B cell (primary cell): ENCODE measurements at regions of chr19 and their contacts with region 1.

Region 1: DNA sequence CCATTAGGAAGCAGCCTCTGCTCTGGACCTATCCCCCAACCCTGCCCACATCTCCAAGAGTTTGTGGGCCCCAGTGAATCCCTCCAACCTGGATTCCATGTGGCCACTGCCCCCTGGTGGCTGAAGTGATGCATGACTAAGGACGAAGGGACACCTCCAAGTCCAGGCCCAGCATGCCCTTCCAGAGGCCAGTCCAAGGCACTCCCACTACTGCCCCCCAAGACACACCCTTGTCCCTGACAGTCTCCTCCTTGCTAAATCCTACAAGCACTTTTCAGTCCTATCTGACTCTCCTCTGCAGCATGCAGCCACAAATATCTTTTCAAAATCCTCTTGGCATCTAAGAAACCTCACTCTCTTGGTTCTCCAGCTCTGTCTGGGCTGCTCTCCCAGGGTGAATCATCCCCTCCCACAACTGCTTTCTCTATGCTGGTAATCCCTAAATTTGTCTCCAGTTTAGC is 33.0 kb downstream of the DEDD2 start:
- DNase-seq: peak; percentile 78
- ATAC-seq: peak; percentile 64
- H3K4me3 ChIP-seq: no peak overlapping the region
- H3K4me3 Mint-ChIP-seq: no peak overlapping the region
- H3K27ac ChIP-seq: no peak overlapping the region
- H3K27ac Mint-ChIP-seq: peak overlapping the region; percentile 27
- H3K4me1 ChIP-seq: peaks cover 33 to 41% of the 10 kb centered on the region in 2 donors
- H3K4me1 Mint-ChIP-seq: peaks cover 41% of the 10 kb centered on the region
- H3K27me3 ChIP-seq: peaks cover 0 to 13% (median 12%) of the 10 kb centered on the region in 4 experiments
- H3K27me3 Mint-ChIP-seq: peaks cover 8% of the 10 kb centered on the region
- CTCF ChIP-seq: peak; percentile 91

Region 2: GRCh38 chr19:41998246-41999020 is 186.0 kb before region 1 on chr19:
- CTCF ChIA-PET with region 1: no interaction called
- POLR2A ChIA-PET with region 1: no interaction called
- intact Hi-C with region 1: no loop called
- DNase-seq: peak; percentile 54
- ATAC-seq: no peak
- H3K4me3 ChIP-seq: no peak overlapping the region
- H3K4me3 Mint-ChIP-seq: peak overlapping the region; percentile 60
- H3K27ac ChIP-seq: no peak overlapping the region
- H3K27ac Mint-ChIP-seq: no peak overlapping the region
- H3K4me1 ChIP-seq: peaks cover 26 to 29% of the 10 kb centered on the region in 2 donors
- H3K4me1 Mint-ChIP-seq: peaks cover 39% of the 10 kb centered on the region
- H3K27me3 ChIP-seq: peaks cover 0 to 68% (median 37%) of the 10 kb centered on the region in 4 experiments
- H3K27me3 Mint-ChIP-seq: peaks cover 74% of the 10 kb centered on the region
- CTCF ChIP-seq: peak; percentile 61

Region 3: GRCh38 chr19:42113641-42114348 is 70.6 kb before region 1 on chr19:
- CTCF ChIA-PET with region 1: interaction called, 150 read pairs
- POLR2A ChIA-PET with region 1: no interaction called
- intact Hi-C with region 1: loop called (anchors 1 kb)
- DNase-seq: peak; percentile 84
- ATAC-seq: peak; percentile 80
- H3K4me3 ChIP-seq: peak overlapping the region in 4 of 5 experiments; percentile 16 to 49 (median 38)
- H3K4me3 Mint-ChIP-seq: peak overlapping the region; percentile 87
- H3K27ac ChIP-seq: peak overlapping the region; percentile 71 to 79
- H3K27ac Mint-ChIP-seq: peak overlapping the region; percentile 98
- H3K4me1 ChIP-seq: peaks cover 81 to 98% of the 10 kb centered on the region in 2 donors
- H3K4me1 Mint-ChIP-seq: peaks cover 91% of the 10 kb centered on the region
- H3K27me3 ChIP-seq: no peaks in the 10 kb centered on the region
- H3K27me3 Mint-ChIP-seq: no peaks in the 10 kb centered on the region
- CTCF ChIP-seq: no peak

Region 4: DNA sequence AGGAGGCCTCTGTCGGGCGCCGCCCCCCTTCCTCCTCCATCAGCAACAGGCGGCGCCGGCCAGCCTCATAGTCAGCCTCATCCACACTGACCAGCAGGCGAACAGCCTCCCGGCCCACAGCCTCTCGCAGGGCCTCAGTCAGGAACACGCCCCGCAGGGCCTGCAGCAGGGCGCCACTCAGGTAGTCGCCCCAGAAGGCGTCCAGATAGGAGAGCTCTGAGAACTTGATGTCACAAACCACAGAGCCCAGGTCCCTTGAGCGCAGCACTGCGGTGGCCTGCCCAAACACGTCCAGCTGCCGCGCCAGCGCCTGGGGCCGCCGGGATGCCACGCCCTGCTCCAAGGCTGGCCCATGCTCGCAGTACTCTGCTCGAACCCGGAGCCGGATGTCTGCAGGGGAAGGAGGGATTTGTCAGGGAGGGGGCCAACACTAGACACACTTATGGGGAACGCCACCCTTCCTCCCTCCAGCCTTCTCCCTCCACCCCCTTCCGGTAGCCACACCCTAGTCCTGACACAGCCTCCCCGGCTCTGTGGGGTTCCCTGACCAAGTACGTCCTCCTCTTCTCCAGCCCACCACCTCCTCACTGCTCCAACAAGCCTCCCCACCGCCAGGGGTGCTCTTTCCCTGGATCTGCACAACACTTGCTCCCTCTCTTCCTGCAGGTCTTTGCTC is 15.1 kb after region 1 on chr19:
- CTCF ChIA-PET with region 1: interaction called, 14 read pairs
- POLR2A ChIA-PET with region 1: interaction called, 4 read pairs
- intact Hi-C with region 1: loop called (anchors 2 kb)
- DNase-seq: peak; percentile 70
- ATAC-seq: peak; percentile 37
- H3K4me3 ChIP-seq: peak overlapping the region; percentile 27 to 54 (median 44)
- H3K4me3 Mint-ChIP-seq: peak overlapping the region; percentile 77
- H3K27ac ChIP-seq: peak overlapping the region; percentile 91 to 94
- H3K27ac Mint-ChIP-seq: peak overlapping the region; percentile 92
- H3K4me1 ChIP-seq: peaks cover 70 to 84% of the 10 kb centered on the region in 2 donors
- H3K4me1 Mint-ChIP-seq: peaks cover 82% of the 10 kb centered on the region
- H3K27me3 ChIP-seq: no peaks in the 10 kb centered on the region
- H3K27me3 Mint-ChIP-seq: no peaks in the 10 kb centered on the region
- CTCF ChIP-seq: peak; percentile 32

Region 5: DNA sequence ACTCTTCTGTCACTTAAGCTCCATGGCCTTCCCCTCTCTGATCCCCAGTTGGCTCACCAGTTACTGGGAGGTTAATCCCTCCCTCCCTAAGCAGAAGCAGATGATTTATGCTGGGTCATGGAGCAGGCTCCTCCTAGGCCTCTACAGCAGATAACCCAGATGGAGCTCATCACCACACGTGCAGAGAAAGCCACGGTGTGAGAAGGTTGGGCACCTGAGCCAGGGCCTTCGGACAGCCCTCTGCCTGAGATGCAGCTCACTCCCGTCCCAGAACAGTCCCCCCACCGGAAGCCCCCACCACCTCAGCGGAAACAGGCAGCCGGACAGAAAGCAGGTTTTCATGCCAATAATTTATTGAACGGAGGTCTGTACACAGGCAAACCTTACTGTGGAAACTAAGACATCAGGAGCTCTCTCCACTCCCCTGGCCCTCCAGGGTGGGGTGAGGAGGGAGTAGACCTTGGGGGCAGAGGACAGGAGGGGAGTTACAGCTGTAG is 45.5 kb after region 1 on chr19:
- CTCF ChIA-PET with region 1: no interaction called
- POLR2A ChIA-PET with region 1: no interaction called
- intact Hi-C with region 1: no loop called
- DNase-seq: no peak
- ATAC-seq: no peak
- H3K4me3 ChIP-seq: no peak overlapping the region
- H3K4me3 Mint-ChIP-seq: no peak overlapping the region
- H3K27ac ChIP-seq: no peak overlapping the region
- H3K27ac Mint-ChIP-seq: no peak overlapping the region
- H3K4me1 ChIP-seq: no peaks in the 10 kb centered on the region
- H3K4me1 Mint-ChIP-seq: peaks cover 6% of the 10 kb centered on the region
- H3K27me3 ChIP-seq: no peaks in the 10 kb centered on the region
- H3K27me3 Mint-ChIP-seq: no peaks in the 10 kb centered on the region
- CTCF ChIP-seq: no peak

Region 6: DNA sequence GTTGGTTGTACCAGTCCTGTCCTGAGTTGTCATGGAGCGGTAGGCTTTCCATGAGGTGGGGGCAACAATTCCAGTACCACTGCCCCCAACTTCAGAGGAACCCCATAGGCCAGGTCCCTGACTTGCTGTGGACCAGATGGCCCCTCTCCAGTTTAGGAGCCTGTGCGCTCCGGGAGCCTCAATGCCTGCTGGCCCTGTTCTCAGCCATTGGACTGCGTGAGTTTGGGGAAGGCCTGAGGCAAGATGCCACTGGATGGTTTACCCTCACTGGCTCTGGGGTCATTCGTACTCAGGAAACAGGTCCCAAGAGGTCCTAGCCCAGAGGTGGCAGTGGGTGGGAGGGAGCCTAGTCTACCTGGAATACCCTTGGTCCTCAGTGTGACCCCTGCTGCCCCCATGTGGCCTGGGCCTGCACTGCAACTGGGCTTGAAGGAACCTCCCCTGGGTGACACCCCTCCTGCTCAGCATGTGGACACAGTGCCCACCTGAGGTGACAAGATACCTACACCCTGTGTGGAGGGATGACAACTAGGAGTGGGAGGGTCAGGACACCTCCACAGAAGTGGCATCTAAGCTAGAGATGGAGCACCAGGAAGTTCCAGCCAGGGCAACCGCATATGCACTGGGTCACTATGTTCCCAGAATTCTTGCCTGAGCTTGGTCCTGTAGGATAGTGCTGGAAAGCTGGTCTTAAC is 111.5 kb after region 1 on chr19:
- CTCF ChIA-PET with region 1: interaction called, 4 read pairs
- POLR2A ChIA-PET with region 1: no interaction called
- intact Hi-C with region 1: loop called (anchors 5 kb)
- DNase-seq: peak; percentile 89
- ATAC-seq: peak; percentile 98
- H3K4me3 ChIP-seq: no peak overlapping the region
- H3K4me3 Mint-ChIP-seq: no peak overlapping the region
- H3K27ac ChIP-seq: no peak overlapping the region
- H3K27ac Mint-ChIP-seq: peak overlapping the region; percentile 71
- H3K4me1 ChIP-seq: peaks cover 3 to 10% of the 10 kb centered on the region in 2 donors
- H3K4me1 Mint-ChIP-seq: peaks cover 11% of the 10 kb centered on the region
- H3K27me3 ChIP-seq: no peaks in the 10 kb centered on the region
- H3K27me3 Mint-ChIP-seq: no peaks in the 10 kb centered on the region
- CTCF ChIP-seq: peak; percentile 91